ENCODE measurements at regions of chr7 and their contacts with region 1.

Region 1: GRCh38 chr7:139731802-139732470 is 45.9 kb downstream of the HIPK2 start:
- DNase-seq: no peak

Region 2: GRCh38 chr7:139598445-139599049 is 133.4 kb before region 1 on chr7:
- intact Hi-C with region 1: no loop called
- DNase-seq: no peak

Region 3: DNA sequence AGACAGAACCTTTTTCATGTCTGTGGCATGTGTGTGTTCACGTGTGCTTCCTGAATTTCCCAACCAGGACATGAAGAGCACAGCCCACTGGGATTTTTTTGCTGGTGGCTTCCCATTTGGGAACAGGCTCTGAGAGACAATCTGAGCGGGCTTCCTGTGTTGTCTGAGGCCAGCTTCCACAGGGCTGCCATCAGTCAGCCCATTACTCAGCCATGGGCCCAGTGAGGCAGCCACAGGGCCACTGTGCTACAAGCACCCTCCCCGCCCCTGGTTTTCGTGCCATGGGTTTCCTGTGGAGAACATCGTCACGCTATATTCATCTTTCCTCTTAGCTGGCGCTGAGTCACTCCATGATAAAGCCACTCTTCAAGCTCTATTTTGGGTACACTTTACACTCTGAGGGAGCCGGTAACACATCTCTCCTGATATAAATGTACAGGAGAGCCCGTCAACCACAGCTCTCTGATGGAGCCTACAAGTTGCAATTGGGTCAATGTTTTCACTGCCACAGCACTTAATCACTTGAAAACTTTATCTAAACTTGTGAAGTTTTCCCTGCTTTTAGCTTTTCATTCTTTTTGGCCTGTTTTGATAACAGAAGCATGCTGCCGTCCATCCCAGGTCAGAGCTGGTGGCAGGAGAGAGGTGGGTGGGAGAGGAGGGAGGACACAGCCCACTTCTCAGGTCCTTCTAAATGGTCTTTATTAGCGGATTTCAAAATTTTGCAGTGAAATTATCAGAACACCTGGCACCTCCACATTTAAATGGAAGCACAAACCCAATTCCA is 51.1 kb before region 1 on chr7:
- intact Hi-C with region 1: loop called (anchors 2 kb)
- DNase-seq: peak; percentile 90

Region 4: DNA sequence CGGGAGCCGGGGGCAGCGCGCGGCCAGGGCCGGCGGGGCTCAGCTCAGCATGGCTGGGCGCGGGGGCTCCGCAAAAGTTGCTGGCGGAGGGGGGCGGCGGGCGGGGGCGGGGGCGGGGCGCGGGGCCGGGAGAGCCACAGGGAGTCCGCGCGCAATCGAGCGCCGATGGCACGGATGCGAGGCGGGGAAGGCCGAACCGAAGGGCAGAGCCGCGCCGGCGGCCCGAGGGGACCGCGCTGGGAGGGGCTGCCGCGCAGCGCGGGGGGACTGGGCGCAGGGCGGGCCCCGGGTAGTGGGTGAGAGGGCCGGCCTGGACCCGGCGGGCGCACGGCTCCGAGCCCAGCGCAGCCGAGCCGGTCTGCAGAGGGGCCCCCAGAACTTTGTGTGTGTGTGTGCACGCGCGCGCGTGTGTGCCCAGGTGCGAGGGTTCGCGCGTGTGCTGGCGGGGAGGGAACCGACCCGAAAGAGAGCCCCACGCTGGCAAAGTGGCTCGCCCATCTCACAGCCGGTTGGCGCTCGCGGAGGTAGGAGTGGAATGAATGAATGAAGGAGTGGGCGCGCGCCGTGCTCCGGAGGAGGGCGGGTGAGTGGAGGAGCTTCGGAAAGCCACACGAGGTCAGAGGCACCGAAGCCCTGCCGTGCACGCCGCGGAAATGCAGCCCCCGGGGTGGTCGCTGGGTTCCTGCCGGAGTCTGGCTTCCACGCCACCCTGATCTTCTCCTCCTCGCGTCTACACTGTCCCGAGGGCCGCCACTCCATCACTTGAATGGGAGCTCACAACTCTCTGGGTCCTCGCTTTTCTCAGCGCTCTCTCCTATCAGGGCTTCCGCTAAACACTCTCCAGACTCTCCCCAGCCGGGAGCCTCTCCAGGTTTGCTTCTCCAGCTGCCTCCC is 46.3 kb after region 1 on chr7 and contains the start of gene HIPK2:
- intact Hi-C with region 1: loop called (anchors 2 kb)
- DNase-seq: peak; percentile 88
- total RNA-seq, gene HIPK2: 218 TPM

Measured in cardiac septum (tissue), 1 donor.